ENCODE measurements at regions of chr9 and their contacts with region 1.

Region 1: DNA sequence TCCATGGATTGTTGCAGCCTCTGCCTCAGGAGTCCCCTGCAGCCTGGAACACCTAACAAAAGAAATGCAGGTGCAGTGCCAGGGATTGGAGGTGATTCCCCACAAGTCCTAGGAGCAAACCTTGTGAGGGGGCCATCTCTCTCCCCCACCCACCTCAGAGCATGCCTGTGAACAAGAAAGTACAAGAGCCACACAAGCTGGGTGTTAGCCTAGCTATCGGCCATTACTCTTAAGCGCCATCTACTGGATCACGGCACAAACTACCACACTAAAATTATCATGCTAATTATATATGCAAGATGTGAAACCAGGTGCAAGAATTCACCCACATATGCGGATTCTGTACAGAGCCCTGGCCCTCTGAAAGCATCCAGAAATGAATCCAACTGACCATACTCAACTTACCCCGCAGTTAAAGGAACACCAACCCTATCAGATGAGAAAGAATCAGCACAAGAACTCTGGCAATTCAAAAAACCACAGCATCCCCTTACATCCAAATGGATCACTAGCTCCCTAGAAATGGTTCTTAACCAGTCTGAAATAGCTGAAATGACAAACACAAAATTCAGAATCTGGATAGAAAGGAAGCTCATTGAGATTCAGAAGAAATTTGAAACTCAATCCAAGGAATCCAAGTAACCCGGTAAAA is 16.5 kb upstream of the PRSS3 start:
- DNase-seq: peak; percentile 5 to 67 (median 45)
- H3K4me3 ChIP-seq: no peak overlapping the region
- H3K4me3 Mint-ChIP-seq: no peak overlapping the region
- H3K27ac ChIP-seq: no peak overlapping the region
- H3K27ac Mint-ChIP-seq: no peak overlapping the region
- H3K4me1 ChIP-seq: no peaks in the 10 kb centered on the region
- H3K4me1 Mint-ChIP-seq: no peaks in the 10 kb centered on the region
- H3K27me3 ChIP-seq: no peaks in the 10 kb centered on the region
- H3K27me3 Mint-ChIP-seq: peaks cover 3 to 15% of the 10 kb centered on the region in 2 donors

Region 2: GRCh38 chr9:33623658-33624586 is 154.9 kb before region 1 on chr9:
- CTCF ChIA-PET with region 1: interaction called, 23 read pairs
- POLR2A ChIA-PET with region 1: no interaction called
- DNase-seq: peak; percentile 37 to 72 (median 66)
- H3K4me3 ChIP-seq: no peak overlapping the region
- H3K4me3 Mint-ChIP-seq: no peak overlapping the region
- H3K27ac ChIP-seq: no peak overlapping the region
- H3K27ac Mint-ChIP-seq: no peak overlapping the region
- H3K4me1 ChIP-seq: no peaks in the 10 kb centered on the region
- H3K4me1 Mint-ChIP-seq: peaks cover 4 to 5% (median 5%) of the 10 kb centered on the region in 3 donors
- H3K27me3 ChIP-seq: no peaks in the 10 kb centered on the region
- H3K27me3 Mint-ChIP-seq: peaks cover 21 to 43% of the 10 kb centered on the region in 2 donors

Region 3: GRCh38 chr9:33737811-33738606 is 40.8 kb before region 1 on chr9:
- CTCF ChIA-PET with region 1: interaction called, 14 read pairs
- POLR2A ChIA-PET with region 1: no interaction called
- DNase-seq: peak in 1 of 5 donors; percentile 52
- H3K4me3 ChIP-seq: no peak overlapping the region
- H3K4me3 Mint-ChIP-seq: peak overlapping the region in 1 of 7 donors; percentile 6
- H3K27ac ChIP-seq: no peak overlapping the region
- H3K27ac Mint-ChIP-seq: peak overlapping the region in 1 of 8 donors; percentile 39
- H3K4me1 ChIP-seq: no peaks in the 10 kb centered on the region
- H3K4me1 Mint-ChIP-seq: peaks cover 0 to 3% (median 2%) of the 10 kb centered on the region in 3 donors
- H3K27me3 ChIP-seq: no peaks in the 10 kb centered on the region
- H3K27me3 Mint-ChIP-seq: peaks cover 14 to 25% of the 10 kb centered on the region in 2 donors

Region 4: DNA sequence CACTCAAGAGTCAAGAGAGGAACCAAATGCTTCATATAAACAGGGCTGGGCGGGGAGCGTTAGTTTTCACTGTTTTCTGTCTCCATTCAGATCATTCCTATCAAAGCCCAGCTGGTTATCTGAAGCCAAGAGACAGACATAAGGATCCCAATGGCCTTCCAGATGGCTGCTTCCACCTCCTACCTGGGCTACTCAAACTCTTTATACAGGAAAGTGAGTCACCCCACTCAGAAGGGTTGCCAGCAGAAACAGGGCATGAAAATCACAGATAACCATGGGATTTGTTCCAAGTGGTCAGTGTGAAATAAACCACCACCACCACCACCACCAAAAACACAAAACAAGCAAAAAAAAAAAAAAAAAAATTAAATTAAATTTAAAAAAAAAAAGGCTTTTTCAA is 22.1 kb after region 1 on chr9:
- CTCF ChIA-PET with region 1: no interaction called
- POLR2A ChIA-PET with region 1: no interaction called
- DNase-seq: no peak
- H3K4me3 ChIP-seq: no peak overlapping the region
- H3K4me3 Mint-ChIP-seq: no peak overlapping the region
- H3K27ac ChIP-seq: no peak overlapping the region
- H3K27ac Mint-ChIP-seq: no peak overlapping the region
- H3K4me1 ChIP-seq: no peaks in the 10 kb centered on the region
- H3K4me1 Mint-ChIP-seq: no peaks in the 10 kb centered on the region
- H3K27me3 ChIP-seq: no peaks in the 10 kb centered on the region
- H3K27me3 Mint-ChIP-seq: peaks cover 6 to 41% of the 10 kb centered on the region in 2 donors

Region 5: GRCh38 chr9:33816327-33817252 is 37.8 kb after region 1 on chr9 and contains the start of gene UBE2R2:
- CTCF ChIA-PET with region 1: no interaction called
- POLR2A ChIA-PET with region 1: no interaction called
- DNase-seq: peak; percentile 89 to 96 (median 93)
- H3K4me3 ChIP-seq: peak within 1 kb of the TSS; percentile 71
- H3K4me3 Mint-ChIP-seq: peak within 1 kb of the TSS; percentile 91 to 100 (median 96)
- H3K27ac ChIP-seq: peak within 1 kb of the TSS; percentile 90
- H3K27ac Mint-ChIP-seq: peak within 1 kb of the TSS; percentile 93 to 100 (median 98)
- H3K4me1 ChIP-seq: peaks cover 33% of the 10 kb centered on the region
- H3K4me1 Mint-ChIP-seq: peaks cover 38 to 58% (median 56%) of the 10 kb centered on the region in 3 donors
- H3K27me3 ChIP-seq: no peaks in the 10 kb centered on the region
- H3K27me3 Mint-ChIP-seq: peaks cover 0 to 1% of the 10 kb centered on the region in 2 donors
- total RNA-seq, gene UBE2R2: 28.8 to 30.3 TPM

Region 6: DNA sequence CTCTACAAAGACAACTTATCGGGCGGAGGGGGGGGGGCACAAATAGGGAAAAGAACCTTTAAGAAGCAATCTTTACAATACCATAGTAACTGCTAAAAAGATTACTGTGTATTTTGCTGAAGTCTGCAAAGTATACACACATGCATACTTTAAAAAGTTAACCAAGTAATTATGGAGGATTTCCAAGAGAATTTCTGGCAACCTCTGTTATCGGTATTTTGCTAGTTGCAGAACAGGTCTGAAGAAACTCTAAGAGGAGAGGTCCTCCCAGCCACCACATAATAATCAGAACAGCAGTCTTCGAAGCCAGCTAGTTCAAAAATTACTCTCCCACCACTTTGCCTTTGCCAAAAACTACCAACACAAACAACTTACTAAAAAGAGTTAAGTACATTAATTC is 213.8 kb after region 1 on chr9:
- CTCF ChIA-PET with region 1: no interaction called
- POLR2A ChIA-PET with region 1: no interaction called
- DNase-seq: no peak
- H3K4me3 ChIP-seq: no peak overlapping the region
- H3K4me3 Mint-ChIP-seq: no peak overlapping the region
- H3K27ac ChIP-seq: no peak overlapping the region
- H3K27ac Mint-ChIP-seq: no peak overlapping the region
- H3K4me1 ChIP-seq: no peaks in the 10 kb centered on the region
- H3K4me1 Mint-ChIP-seq: peaks cover 2 to 12% (median 8%) of the 10 kb centered on the region in 3 donors
- H3K27me3 ChIP-seq: no peaks in the 10 kb centered on the region
- H3K27me3 Mint-ChIP-seq: no peaks in the 10 kb centered on the region